Endothelial cell of umbilical vein (primary cell): ENCODE measurements at regions of chr19 and their contacts with region 1.

Region 1: DNA sequence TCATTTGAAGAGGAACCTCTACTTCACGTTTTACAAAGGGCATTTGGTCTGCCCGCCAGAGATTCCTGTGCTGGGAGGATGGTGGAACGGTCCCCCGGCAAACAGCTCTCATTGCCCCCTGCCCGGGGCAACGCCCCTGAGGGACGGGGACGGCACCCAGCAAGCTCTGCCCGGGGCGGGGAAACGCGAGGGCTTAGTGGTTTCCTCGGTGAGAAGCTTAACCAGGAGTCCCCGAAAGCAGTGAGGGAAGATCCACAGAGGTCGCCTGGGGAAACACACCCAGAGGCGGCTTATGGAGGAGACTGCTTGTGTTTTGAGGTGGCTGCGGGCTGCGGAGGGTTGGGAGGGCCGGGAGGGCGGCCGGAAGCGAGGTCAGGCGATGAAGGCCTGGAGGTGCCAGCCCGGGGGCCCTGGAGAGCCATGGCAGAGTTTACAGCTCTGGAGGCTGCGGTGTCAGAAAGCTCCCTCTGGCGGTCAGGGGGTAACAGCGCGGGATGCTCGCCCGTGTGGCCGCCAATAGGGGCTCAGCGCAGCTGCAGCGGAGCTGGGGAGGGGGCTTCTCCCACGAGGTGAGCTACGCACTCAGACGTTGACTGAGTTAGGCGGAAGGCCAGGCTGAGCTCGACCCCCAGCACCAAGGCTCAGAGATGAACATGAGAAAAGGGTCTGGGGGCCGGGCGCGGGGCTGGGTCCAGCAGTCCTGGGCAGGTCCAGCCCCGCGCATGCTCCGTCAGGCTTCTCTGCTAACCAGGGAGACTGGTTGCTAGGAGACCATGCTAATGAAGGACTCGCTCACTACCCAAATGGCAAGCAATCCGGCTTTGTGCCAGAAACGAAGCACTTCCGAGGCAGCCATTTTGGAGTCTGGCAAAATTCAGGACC is 652 bp upstream of the TPGS1 start:
- DNase-seq: peak; percentile 100
- H3K4me3 ChIP-seq: peak overlapping the region; percentile 26 to 91 (median 65)
- H3K27ac ChIP-seq: peak overlapping the region; percentile 87
- H3K4me1 ChIP-seq: peaks cover 18% of the 10 kb centered on the region
- H3K27me3 ChIP-seq: no peaks in the 10 kb centered on the region
- CTCF ChIP-seq: peak; percentile 97 to 100
- POLR2A ChIP-seq: no peak

Region 2: DNA sequence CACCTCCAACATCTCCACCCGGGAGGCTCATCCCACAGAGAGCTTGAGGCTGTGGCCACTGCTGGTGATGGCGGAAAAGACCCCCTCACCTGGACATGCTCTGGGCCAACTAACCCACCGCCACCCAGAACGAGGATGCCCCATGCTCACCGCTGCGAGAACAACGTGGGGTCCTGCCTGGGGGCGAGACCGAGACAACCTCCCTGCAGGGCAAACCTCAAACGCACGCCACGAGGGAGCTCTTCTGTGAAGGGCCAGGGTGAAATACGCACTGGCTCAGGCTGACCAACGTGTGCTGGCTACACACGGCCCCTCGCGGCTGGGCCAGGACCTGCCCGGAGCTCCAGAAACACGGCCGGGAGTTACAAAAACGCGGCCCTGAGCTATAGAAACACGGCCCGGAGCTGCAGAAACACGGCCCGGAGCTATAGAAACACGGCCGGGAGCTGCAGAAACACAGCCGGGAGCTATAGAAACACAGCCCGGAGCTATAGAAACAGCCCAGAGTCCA is 196.4 kb before region 1 on chr19:
- CTCF ChIA-PET with region 1: interaction called, 11 read pairs
- POLR2A ChIA-PET with region 1: no interaction called
- dilution Hi-C with region 1: no loop called
- intact Hi-C with region 1: no loop called
- DNase-seq: peak; percentile 85
- H3K4me3 ChIP-seq: peak overlapping the region; percentile 0 to 26 (median 5)
- H3K27ac ChIP-seq: peak overlapping the region; percentile 10
- H3K4me1 ChIP-seq: peaks cover 23% of the 10 kb centered on the region
- H3K27me3 ChIP-seq: no peaks in the 10 kb centered on the region
- CTCF ChIP-seq: peak in 1 of 2 donors; percentile 30
- POLR2A ChIP-seq: no peak

Region 3: DNA sequence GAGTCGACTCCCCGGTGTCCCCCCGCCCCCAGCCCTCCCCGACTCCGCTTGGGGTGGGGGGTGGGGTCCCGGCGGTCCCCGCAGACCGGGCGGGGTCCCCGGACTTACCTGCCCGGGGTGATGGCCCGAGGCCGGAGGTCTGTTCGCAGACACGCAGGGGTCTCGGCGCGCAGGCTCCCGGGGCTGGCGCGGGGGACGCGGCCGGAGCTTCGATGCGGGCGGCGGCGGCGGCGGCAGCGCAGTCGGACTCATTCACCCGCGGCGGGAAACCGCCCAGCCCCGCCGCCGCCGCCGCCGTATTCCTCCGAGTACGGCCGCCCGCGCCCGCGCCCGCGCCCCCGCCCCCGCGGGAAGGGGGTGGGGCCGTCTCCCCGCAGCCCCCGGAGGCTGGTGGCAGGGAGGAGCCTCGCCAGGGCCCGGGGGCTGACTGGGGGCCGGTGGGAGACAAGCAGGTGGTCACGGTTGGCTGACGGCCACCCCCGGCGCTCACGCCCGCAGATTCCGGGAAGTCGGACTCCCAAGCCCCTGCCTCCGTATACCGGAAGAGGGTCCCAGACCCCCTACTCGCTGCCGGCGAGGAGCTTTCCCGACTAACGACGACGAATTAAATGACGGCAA is 97.6 kb before region 1 on chr19 and contains the start of gene C2CD4C:
- CTCF ChIA-PET with region 1: no interaction called
- POLR2A ChIA-PET with region 1: no interaction called
- dilution Hi-C with region 1: no loop called
- intact Hi-C with region 1: no loop called
- DNase-seq: no peak
- H3K4me3 ChIP-seq: peak within 1 kb of the TSS in 1 of 3 experiments; percentile 30
- H3K27ac ChIP-seq: no peak within 1 kb of the TSS
- H3K4me1 ChIP-seq: peaks cover 3% of the 10 kb centered on the region
- H3K27me3 ChIP-seq: peaks cover 11 to 14% of the 10 kb centered on the region in 2 experiments
- CTCF ChIP-seq: no peak
- POLR2A ChIP-seq: no peak
- total RNA-seq, gene C2CD4C: 0.37 and 0.38 TPM in 2 replicates

Region 4: DNA sequence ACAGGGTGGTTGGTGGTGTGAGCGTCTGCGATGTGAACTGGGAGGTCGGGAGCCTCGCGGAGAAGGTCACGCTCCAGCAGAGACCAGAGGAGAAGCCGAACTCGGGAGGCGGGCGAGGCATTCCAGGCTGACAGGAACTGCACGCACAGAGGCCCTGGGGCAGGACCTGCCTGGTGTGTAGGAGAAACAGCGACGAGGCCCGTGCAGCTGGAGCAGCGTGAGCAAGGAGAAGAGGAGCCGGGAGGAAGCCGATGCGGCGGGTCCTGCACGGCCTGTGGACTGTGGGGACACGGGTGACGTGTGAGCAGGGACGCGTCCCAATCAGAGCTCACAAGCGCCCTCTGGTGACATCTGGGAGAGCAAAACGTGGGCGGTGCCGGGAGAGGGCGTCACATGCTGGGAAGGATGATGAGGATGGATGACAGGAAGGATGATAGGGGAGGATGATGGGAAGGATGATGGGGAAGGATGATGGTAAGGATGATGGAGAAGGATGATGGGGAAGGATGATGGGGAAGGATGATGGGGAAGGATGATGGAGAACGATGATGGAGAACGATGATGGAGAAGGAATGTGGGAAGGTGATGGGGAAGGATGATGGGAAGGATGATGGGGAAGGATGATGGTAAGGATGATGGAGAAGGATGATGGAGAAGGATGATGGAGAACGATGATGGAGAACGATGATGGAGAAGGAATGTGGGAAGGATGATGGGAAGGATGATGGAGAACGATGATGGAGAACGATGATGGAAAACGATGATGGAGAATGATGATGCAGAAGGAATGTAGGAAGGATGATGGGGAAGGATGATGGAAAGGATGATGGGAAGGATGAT is 26.4 kb before region 1 on chr19:
- CTCF ChIA-PET with region 1: interaction called, 10 read pairs
- POLR2A ChIA-PET with region 1: interaction called, 9 read pairs
- dilution Hi-C with region 1: no loop called
- intact Hi-C with region 1: no loop called
- DNase-seq: peak; percentile 55
- H3K4me3 ChIP-seq: no peak overlapping the region
- H3K27ac ChIP-seq: no peak overlapping the region
- H3K4me1 ChIP-seq: no peaks in the 10 kb centered on the region
- H3K27me3 ChIP-seq: no peaks in the 10 kb centered on the region
- CTCF ChIP-seq: peak; percentile 35 to 62
- POLR2A ChIP-seq: no peak

Region 5: GRCh38 chr19:495402-496186 is 11.1 kb before region 1 on chr19:
- CTCF ChIA-PET with region 1: interaction called, 28 read pairs
- POLR2A ChIA-PET with region 1: no interaction called
- dilution Hi-C with region 1: no loop called
- intact Hi-C with region 1: no loop called
- DNase-seq: peak; percentile 33
- H3K4me3 ChIP-seq: no peak overlapping the region
- H3K27ac ChIP-seq: no peak overlapping the region
- H3K4me1 ChIP-seq: no peaks in the 10 kb centered on the region
- H3K27me3 ChIP-seq: peaks cover 9 to 12% of the 10 kb centered on the region in 2 experiments
- CTCF ChIP-seq: peak; percentile 73 to 79
- POLR2A ChIP-seq: no peak

Region 6: DNA sequence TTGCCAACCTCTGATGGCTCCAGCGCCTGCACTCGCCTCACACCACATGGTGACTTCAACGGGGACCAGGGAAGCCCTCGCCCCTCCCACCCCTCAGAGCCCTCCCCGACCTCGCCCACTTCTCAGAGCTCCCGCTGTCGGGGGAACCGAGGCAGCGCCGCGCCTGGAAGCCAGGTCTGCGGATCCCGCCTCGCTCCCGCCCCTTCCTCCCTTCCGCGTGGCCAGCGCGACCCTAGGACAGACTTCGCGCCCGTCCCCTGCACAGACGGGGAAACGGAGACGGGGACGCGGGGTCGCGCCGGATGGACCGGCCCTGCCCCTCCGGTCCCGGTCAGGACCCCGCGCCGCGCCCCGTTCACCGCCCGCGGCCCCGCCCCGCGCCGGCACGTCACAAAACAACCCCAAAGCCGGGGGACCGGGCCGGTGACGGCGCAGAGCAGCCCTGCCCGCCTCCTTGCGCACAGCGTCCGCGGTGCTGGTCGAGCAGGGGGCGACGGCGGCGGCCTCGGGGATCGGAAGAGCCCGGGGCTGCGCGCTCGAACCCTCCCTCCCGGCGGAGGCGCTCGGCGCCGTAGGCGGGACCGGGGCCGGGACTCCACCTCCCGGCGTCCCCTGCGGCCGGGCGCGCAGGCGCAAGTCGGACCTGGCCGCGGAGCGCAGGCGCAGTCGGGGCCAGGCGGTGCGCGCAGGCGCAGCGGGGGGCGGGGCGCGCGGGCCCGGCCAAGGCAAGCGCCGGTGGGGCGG is 24.5 kb after region 1 on chr19:
- CTCF ChIA-PET with region 1: interaction called, 36 read pairs
- POLR2A ChIA-PET with region 1: interaction called, 5 read pairs
- dilution Hi-C with region 1: no loop called
- intact Hi-C with region 1: loop called (anchors 2 kb)
- DNase-seq: peak; percentile 73
- H3K4me3 ChIP-seq: peak overlapping the region; percentile 57 to 88 (median 76)
- H3K27ac ChIP-seq: peak overlapping the region; percentile 70
- H3K4me1 ChIP-seq: peaks cover 17% of the 10 kb centered on the region
- H3K27me3 ChIP-seq: no peaks in the 10 kb centered on the region
- CTCF ChIP-seq: peak in 1 of 2 donors; percentile 8
- POLR2A ChIP-seq: peak; percentile 20